MCF 10A (cell line): ENCODE measurements at regions of chr10 and their contacts with region 1.

Region 1: DNA sequence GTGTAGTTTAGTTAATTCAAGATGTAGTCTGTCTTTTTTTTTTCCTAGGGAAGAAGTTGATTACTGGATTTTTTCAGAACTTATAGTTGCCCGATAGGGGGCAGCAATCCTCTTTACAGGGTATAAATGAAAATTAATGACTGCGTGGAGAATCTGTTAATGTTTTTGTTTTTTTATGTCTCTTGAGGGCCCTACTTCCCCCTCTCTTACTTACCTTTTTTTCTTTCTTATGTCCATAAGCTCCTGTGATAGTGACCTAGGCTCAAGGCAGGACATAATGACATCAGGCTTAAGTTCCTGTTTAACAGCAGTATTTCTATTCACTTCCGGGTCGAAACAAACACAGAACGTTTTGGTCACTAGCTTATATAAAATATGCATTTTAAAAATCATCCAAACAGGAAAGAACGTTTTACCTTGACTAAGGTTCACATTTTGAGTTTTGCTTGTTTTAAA is 18.8 kb downstream of the CDC123 start:
- DNase-seq: peak; percentile 65
- H3K4me3 Mint-ChIP-seq: no peak overlapping the region
- H3K27ac Mint-ChIP-seq: peak overlapping the region; percentile 59
- H3K4me1 Mint-ChIP-seq: no peaks in the 10 kb centered on the region
- H3K27me3 Mint-ChIP-seq: no peaks in the 10 kb centered on the region
- CTCF ChIP-seq: peak; percentile 66

Region 2: GRCh38 chr10:11424456-11425297 is 790.1 kb before region 1 on chr10:
- CTCF ChIA-PET with region 1: no interaction called
- POLR2A ChIA-PET with region 1: no interaction called
- intact Hi-C with region 1: no loop called
- DNase-seq: peak; percentile 57
- H3K4me3 Mint-ChIP-seq: no peak overlapping the region
- H3K27ac Mint-ChIP-seq: no peak overlapping the region
- H3K4me1 Mint-ChIP-seq: no peaks in the 10 kb centered on the region
- H3K27me3 Mint-ChIP-seq: no peaks in the 10 kb centered on the region
- CTCF ChIP-seq: peak; percentile 78

Region 3: GRCh38 chr10:12097791-12098190 is 117.0 kb before region 1 on chr10:
- CTCF ChIA-PET with region 1: no interaction called
- POLR2A ChIA-PET with region 1: no interaction called
- intact Hi-C with region 1: no loop called
- DNase-seq: no peak
- H3K4me3 Mint-ChIP-seq: no peak overlapping the region
- H3K27ac Mint-ChIP-seq: no peak overlapping the region
- H3K4me1 Mint-ChIP-seq: no peaks in the 10 kb centered on the region
- H3K27me3 Mint-ChIP-seq: no peaks in the 10 kb centered on the region
- CTCF ChIP-seq: no peak

Region 4: GRCh38 chr10:12202226-12202625 is 12.6 kb before region 1 on chr10:
- CTCF ChIA-PET with region 1: interaction called, 15 read pairs
- POLR2A ChIA-PET with region 1: interaction called, 3 read pairs
- intact Hi-C with region 1: no loop called
- DNase-seq: no peak
- H3K4me3 Mint-ChIP-seq: no peak overlapping the region
- H3K27ac Mint-ChIP-seq: no peak overlapping the region
- H3K4me1 Mint-ChIP-seq: peaks cover 10% of the 10 kb centered on the region
- H3K27me3 Mint-ChIP-seq: no peaks in the 10 kb centered on the region
- CTCF ChIP-seq: no peak

Region 5: GRCh38 chr10:12225444-12225843 is 10.7 kb after region 1 on chr10:
- CTCF ChIA-PET with region 1: interaction called, 30 read pairs
- POLR2A ChIA-PET with region 1: interaction called, 3 read pairs
- intact Hi-C with region 1: no loop called
- DNase-seq: no peak
- H3K4me3 Mint-ChIP-seq: no peak overlapping the region
- H3K27ac Mint-ChIP-seq: no peak overlapping the region
- H3K4me1 Mint-ChIP-seq: no peaks in the 10 kb centered on the region
- H3K27me3 Mint-ChIP-seq: no peaks in the 10 kb centered on the region
- CTCF ChIP-seq: no peak